ENCODE measurements at regions of chr1 and their contacts with region 1.

Region 1: GRCh38 chr1:103514920-103515503 is 10.5 kb upstream of the RNPC3 start:
- DNase-seq: no peak
- H3K4me3 ChIP-seq: no peak overlapping the region
- H3K27ac ChIP-seq: no peak overlapping the region
- H3K4me1 ChIP-seq: no peaks in the 10 kb centered on the region
- H3K27me3 ChIP-seq: no peaks in the 10 kb centered on the region
- CTCF ChIP-seq: peak; percentile 63

Region 2: DNA sequence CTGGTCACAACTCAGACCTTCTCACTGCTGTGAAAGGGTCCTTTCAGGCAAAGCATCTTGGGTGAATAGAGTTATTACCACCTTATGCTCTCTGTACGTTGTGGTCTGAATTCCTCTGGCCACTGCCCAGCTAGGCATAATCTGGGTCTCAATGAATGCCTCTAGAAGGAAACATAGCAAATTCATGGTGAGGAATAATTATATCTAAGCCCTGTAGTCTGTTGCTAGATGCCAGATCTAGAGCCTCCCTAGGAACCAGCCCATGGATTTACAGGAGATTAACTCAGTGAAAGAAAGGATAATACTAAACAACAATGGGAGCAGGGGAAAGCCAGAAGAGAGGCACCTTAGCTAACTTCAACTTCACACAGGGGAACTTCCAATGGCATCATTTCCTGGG is 404.3 kb before region 1 on chr1:
- intact Hi-C with region 1: loop called (anchors 5 kb)
- DNase-seq: no peak
- H3K4me3 ChIP-seq: no peak overlapping the region
- H3K27ac ChIP-seq: no peak overlapping the region
- H3K4me1 ChIP-seq: no peaks in the 10 kb centered on the region
- H3K27me3 ChIP-seq: no peaks in the 10 kb centered on the region
- CTCF ChIP-seq: no peak

Region 3: DNA sequence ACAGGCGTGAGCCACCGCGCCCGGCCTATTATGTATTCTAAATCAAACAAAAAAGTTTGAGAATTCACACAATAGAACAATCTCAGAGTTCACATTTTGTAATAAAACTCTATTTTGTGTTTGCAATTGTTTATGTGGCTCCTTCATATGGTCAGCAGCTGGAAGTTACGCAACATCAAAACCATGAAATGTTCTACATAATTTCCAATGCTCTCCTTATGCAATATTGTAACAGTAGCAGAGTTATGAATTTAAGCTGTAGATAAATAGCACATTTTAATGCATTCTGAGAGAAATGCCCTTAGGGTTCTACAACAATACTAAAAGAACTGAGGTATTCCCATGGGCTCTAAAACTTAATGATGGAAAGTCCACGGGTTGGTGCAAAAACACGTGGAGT is 344.4 kb before region 1 on chr1:
- intact Hi-C with region 1: no loop called
- DNase-seq: no peak
- H3K4me3 ChIP-seq: no peak overlapping the region
- H3K27ac ChIP-seq: no peak overlapping the region
- H3K4me1 ChIP-seq: no peaks in the 10 kb centered on the region
- H3K27me3 ChIP-seq: no peaks in the 10 kb centered on the region
- CTCF ChIP-seq: no peak